ENCODE measurements at regions of chr10 and their contacts with region 1.

Region 1: DNA sequence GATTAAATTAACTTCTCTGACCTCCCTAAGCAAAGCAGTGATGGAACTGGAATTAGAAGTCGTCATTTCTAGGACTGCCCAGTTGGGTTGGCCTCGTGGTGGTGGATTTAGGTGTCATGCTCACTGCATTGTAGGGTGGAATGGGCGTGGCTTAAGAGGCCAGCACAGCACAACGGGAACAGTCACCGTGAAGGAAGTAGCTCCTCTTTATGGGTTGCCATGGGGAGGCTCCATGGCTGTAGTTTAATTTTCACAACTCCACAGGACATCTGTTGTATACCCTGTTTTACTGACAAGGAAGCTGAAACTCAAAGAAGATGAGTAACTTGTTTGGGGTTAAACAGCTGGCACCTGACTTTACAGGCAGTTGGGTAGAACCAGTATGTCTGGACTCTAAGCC is 208.3 kb downstream of the CELF2 start:
- DNase-seq: peak; percentile 34 to 77 (median 55)
- H3K4me3 ChIP-seq: peak overlapping the region; percentile 38
- H3K4me3 Mint-ChIP-seq: peak overlapping the region; percentile 44 to 89 (median 81)
- H3K27ac ChIP-seq: peak overlapping the region; percentile 51
- H3K27ac Mint-ChIP-seq: peak overlapping the region; percentile 95 to 98 (median 97)
- H3K4me1 ChIP-seq: peaks cover 90% of the 10 kb centered on the region
- H3K4me1 Mint-ChIP-seq: peaks cover 94 to 100% (median 100%) of the 10 kb centered on the region in 3 donors
- H3K27me3 ChIP-seq: no peaks in the 10 kb centered on the region
- H3K27me3 Mint-ChIP-seq: no peaks in the 10 kb centered on the region

Region 2: GRCh38 chr10:11178606-11179515 is 47.1 kb before region 1 on chr10:
- CTCF ChIA-PET with region 1: interaction called, 4 read pairs
- POLR2A ChIA-PET with region 1: interaction called, 11 read pairs
- DNase-seq: peak; percentile 80 to 95 (median 89)
- H3K4me3 ChIP-seq: peak overlapping the region; percentile 42
- H3K4me3 Mint-ChIP-seq: peak overlapping the region in 3 of 7 donors; percentile 69 to 89 (median 78)
- H3K27ac ChIP-seq: peak overlapping the region; percentile 69
- H3K27ac Mint-ChIP-seq: peak overlapping the region in 1 of 8 donors; percentile 96
- H3K4me1 ChIP-seq: peaks cover 96% of the 10 kb centered on the region
- H3K4me1 Mint-ChIP-seq: peaks cover 0 to 31% (median 0%) of the 10 kb centered on the region in 3 donors
- H3K27me3 ChIP-seq: no peaks in the 10 kb centered on the region
- H3K27me3 Mint-ChIP-seq: no peaks in the 10 kb centered on the region

Region 3: GRCh38 chr10:11236234-11236633 is 10.3 kb after region 1 on chr10:
- CTCF ChIA-PET with region 1: interaction called, 9 read pairs
- POLR2A ChIA-PET with region 1: interaction called, 10 read pairs
- DNase-seq: peak in 2 of 5 donors; percentile 35 to 47
- H3K4me3 ChIP-seq: peak overlapping the region; percentile 3
- H3K4me3 Mint-ChIP-seq: peak overlapping the region; percentile 33 to 82 (median 72)
- H3K27ac ChIP-seq: no peak overlapping the region
- H3K27ac Mint-ChIP-seq: peak overlapping the region; percentile 71 to 98 (median 93)
- H3K4me1 ChIP-seq: peaks cover 92% of the 10 kb centered on the region
- H3K4me1 Mint-ChIP-seq: peaks cover 72 to 99% (median 89%) of the 10 kb centered on the region in 3 donors
- H3K27me3 ChIP-seq: no peaks in the 10 kb centered on the region
- H3K27me3 Mint-ChIP-seq: no peaks in the 10 kb centered on the region

Region 4: GRCh38 chr10:11358011-11358410 is 132.1 kb after region 1 on chr10:
- CTCF ChIA-PET with region 1: no interaction called
- POLR2A ChIA-PET with region 1: no interaction called
- DNase-seq: no peak
- H3K4me3 ChIP-seq: no peak overlapping the region
- H3K4me3 Mint-ChIP-seq: no peak overlapping the region
- H3K27ac ChIP-seq: no peak overlapping the region
- H3K27ac Mint-ChIP-seq: no peak overlapping the region
- H3K4me1 ChIP-seq: no peaks in the 10 kb centered on the region
- H3K4me1 Mint-ChIP-seq: no peaks in the 10 kb centered on the region
- H3K27me3 ChIP-seq: peaks cover 4% of the 10 kb centered on the region
- H3K27me3 Mint-ChIP-seq: peaks cover 0 to 3% of the 10 kb centered on the region in 2 donors